Heart right ventricle (tissue), 16 donors: ENCODE measurements at regions of chr18 and their contacts with region 1.

Region 1: DNA sequence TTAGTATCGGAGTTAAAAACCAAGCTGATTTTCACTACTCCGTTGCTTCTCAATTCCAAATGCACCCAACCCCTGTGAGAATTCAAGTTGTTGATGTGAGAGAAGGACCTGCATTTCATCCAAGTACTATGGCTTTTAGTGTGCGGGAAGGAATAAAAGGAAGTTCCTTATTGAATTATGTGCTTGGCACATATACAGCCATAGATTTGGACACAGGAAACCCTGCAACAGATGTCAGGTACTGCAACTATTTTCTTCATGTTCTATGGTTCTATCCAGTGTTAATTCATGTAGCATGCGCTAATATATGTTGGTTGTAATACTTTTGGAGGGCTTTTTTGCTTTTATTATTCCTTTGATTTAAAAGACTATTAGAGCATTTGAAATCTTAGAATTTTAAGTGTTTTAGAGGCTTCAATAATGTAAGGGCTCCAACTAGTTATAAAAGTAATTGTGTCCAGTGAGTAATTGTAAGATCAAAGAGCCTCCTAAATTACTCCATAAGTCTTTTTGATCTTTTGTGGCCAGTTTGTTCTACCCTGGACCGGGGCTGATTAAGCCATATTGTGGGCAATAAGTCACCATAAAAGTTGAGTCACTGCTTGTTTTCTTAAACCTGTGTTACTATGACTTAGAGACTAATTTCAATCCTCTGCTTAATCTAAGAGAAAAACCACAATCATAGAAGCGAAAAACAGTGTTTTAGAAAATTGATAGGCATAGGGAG is 22.9 kb downstream of the DSG4 start:
- DNase-seq: no peak
- ATAC-seq: no peak
- H3K4me3 ChIP-seq: no peak overlapping the region
- H3K27ac ChIP-seq: no peak overlapping the region
- H3K4me1 ChIP-seq: peaks cover 0 to 23% (median 14%) of the 10 kb centered on the region in 9 donors
- H3K27me3 ChIP-seq: no peaks in the 10 kb centered on the region
- CTCF ChIP-seq: no peak

Region 2: GRCh38 chr18:31301201-31301655 is 98.2 kb before region 1 on chr18:
- intact Hi-C with region 1: loop called in 1 of 10 experiments (anchors 5 kb)
- DNase-seq: peak in 1 of 2 donors; percentile 12
- ATAC-seq: peak in 7 of 8 donors; percentile 66 to 94 (median 74)
- H3K4me3 ChIP-seq: no peak overlapping the region
- H3K27ac ChIP-seq: peak overlapping the region in 2 of 10 donors; percentile 3 to 32
- H3K4me1 ChIP-seq: peaks cover 0 to 18% (median 0%) of the 10 kb centered on the region in 9 donors
- H3K27me3 ChIP-seq: no peaks in the 10 kb centered on the region
- CTCF ChIP-seq: no peak